Lower leg skin (tissue), 4 donors: ENCODE measurements at regions of chr17 and their contacts with region 1.

Region 1: DNA sequence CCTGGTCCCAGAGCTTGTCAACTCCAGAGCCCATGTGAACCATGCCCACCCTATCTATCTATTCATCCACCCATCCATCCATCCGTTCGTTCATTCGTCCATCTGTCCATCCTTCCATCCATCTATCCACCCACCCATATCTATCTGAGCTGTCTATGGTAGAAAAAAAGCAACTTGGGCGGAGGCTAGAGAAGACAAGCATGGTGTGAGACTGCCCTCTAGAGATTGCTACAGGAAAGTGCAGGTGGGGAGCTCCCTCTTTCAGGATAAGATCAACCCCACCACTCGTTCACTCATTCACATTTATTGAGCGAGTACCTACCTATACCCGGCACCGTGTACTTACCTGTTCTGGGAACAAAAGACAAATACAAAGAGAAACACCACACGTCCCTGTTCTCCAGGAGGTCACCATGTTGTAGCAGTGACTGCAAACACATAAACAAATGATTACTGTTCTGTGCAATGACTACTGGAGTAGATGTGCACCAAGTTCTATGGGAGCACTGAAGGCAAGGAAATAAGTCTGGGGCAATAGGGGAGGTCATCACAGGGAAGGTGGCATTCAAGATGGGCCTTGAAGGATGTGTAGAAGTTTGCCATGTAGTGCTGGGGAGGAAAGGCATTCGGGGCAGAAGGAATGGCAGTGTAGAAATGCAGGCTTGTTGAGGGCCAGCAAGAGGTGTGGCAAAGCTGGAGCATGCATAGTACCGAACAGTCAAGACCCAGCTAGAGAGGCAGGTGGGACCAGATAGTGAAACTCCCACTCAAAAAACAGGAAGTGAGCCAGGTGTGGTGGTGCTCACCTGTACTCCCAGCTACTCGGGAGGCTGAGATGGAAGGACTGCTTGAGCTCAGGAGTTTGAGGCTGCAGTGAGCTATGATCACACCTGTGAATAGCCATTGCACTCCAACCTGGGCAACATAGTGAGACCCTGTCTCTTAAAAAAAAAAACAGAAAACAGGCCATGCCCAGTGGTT is 13.4 kb upstream of the ATP5MC1 start:
- DNase-seq: peak; percentile 40 to 90
- H3K4me3 ChIP-seq: no peak overlapping the region
- CTCF ChIP-seq: peak in 1 of 3 donors; percentile 66
- POLR2A ChIP-seq: no peak

Region 2: DNA sequence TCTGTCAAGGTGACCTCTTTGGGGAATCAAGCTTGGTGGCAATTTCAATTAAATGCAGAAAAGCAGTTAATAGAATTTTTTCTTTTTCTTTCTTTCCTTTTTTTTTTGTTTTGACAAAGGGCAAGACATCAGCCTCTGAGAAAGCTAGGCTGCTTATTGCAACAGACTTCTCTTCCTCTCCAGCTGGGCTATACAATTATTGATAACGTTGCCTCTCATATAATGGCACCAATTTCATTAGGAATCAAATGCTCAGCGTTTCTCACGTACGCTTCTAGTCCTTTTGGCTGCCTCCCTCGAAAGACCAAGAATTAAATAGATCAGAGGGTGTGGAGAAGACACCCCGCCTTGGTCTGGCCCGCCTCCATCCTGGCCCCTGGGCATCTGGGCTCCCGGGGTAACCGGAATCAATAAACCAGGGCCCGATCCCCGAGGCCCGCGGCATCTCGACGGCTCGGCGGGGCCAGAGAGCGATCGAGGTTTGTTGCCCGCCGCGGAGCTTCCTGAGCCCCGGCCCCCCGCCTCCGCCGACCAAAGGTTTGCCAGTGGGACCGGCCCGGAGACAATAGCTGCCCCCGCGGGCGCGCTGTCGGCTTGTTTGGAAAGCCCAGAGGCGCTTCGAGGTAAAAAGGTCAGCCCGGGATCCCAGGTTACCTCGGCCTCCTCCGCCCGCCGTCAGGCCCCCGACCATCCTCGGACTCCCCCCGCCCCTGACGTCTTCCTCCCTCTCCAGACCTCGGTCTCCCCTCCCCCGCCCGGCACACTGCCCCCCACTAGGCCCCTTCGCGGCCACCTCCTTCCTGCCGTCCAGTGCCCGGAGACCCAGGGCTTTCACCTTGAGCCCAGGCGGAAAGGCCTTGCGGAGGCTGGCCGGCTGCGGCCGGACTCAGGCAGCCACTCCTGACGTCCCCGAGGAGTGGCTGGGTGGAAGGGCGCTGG is 352.3 kb before region 1 on chr17:
- intact Hi-C with region 1: no loop called
- DNase-seq: no peak
- H3K4me3 ChIP-seq: no peak overlapping the region
- CTCF ChIP-seq: no peak
- POLR2A ChIP-seq: no peak

Region 3: DNA sequence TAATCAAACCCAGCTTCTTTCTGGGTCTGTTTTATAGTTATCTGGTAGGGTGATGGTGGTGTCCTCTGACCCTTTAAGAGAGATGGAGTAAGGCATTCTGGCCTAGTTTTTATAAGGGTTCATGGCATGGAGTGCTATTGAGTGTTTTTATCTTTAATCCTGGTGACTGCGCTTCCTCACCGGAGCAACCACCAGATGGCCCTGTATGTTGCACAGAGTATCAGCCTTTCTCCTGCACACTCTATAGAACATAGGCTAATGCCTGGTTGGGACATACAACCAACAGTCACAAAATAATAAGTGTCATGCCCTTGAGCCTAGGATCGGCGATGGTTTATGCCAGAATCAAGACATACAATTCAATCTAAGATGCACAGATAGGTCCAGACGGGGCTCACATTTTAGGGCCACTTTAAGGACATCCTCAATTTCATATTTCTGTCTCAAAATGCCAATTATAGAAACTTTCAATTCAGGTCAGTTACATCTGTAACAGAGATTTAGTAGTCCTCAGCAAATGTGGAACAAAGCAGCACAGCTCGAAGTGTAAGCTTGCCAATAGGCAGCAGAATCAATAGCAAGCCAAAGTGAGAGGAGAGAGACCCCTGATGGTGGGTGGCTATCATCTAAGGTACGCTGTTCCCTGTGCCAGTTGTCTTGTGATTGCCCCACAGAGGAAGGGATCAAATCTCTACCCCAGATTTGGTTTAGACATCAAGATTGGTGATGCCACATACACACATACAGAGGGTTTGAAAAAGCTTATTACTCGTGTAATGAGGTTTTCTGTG is 215.9 kb before region 1 on chr17:
- intact Hi-C with region 1: loop called (anchors 1 kb)
- DNase-seq: peak in 1 of 2 donors; percentile 13
- H3K4me3 ChIP-seq: no peak overlapping the region
- CTCF ChIP-seq: no peak
- POLR2A ChIP-seq: no peak

Region 4: GRCh38 chr17:48718761-48719641 is 160.2 kb before region 1 on chr17:
- intact Hi-C with region 1: loop called (anchors 5 kb)
- DNase-seq: no peak
- H3K4me3 ChIP-seq: no peak overlapping the region
- CTCF ChIP-seq: no peak
- POLR2A ChIP-seq: no peak

Region 5: DNA sequence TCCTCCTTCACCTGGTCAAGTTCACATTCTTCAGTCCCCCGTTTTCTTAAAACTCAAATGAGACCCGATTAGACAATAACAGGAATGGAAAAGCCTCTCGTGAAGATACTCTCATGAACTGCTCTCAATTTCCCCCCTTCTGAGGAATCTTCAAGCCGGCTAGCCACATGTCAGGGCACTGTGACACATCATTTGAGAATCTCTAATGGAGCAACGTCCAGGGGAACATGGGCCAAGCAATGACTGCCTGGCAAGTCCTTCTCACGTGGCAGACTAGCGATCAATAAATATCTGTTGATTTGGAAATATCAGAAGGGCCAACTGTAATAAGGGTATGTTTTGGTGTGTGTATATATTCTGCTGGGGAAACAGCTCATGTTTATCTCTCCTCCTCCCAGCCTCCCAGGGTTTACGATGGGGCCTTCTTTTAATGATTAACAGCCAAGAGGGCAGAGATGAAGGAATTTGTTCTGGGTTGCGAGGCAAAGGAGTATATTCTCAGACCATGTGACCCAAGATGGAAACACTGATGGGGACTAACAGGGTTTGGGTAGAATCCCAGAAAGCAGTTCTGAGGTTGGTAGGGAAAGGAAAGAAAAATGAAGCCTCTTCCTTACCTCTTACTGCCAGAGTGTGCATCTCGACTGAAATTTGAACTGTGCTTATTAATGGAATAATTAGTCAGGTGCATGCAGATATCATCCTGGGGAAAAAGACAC is 83.6 kb before region 1 on chr17:
- intact Hi-C with region 1: loop called (anchors 5 kb)
- DNase-seq: peak; percentile 33 to 90
- H3K4me3 ChIP-seq: no peak overlapping the region
- CTCF ChIP-seq: no peak
- POLR2A ChIP-seq: no peak

Region 6: GRCh38 chr17:48816774-48817590 is 62.2 kb before region 1 on chr17 and contains the start of gene TTLL6:
- intact Hi-C with region 1: loop called (anchors 5 kb)
- DNase-seq: peak; percentile 75 to 96
- H3K4me3 ChIP-seq: no peak within 1 kb of the TSS
- CTCF ChIP-seq: no peak
- POLR2A ChIP-seq: no peak
- total RNA-seq, gene TTLL6: not detected

Region 7: DNA sequence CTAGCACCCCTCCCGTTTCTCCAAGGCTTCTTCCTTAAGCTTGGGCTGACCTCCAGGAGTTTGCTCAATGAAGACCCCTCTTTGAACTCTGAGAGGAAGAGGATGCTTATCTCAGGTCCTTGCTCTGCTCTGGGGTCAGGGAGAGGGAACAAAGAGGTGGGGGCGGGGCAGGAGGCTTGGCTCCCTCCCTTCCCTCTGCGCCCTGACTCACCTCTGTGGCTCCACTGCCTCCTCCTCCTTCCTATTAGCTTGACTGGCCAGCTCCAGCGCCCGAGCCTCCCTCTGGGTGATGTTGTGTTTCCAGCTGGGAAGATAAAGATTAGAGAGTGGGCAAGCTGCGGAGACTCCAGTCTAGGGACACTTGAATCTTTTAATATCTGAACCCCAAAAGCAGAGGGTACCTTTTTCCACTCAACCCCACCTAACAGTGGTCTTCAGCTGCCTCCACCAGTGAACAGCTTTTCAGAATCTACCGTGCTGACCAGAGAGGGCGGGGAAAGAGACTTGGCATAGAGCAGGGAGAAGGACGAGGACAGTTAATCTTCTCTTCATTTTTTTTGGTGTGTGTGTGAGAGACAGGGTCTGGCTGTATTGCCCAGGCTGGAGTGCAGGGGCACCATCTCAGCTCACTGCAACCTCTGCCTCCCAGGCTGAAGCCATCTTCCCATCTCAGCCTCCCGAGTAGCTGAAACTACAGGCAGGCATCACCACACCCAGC is 82.5 kb after region 1 on chr17:
- intact Hi-C with region 1: no loop called
- DNase-seq: no peak
- H3K4me3 ChIP-seq: no peak overlapping the region
- CTCF ChIP-seq: no peak
- POLR2A ChIP-seq: no peak

Region 8: DNA sequence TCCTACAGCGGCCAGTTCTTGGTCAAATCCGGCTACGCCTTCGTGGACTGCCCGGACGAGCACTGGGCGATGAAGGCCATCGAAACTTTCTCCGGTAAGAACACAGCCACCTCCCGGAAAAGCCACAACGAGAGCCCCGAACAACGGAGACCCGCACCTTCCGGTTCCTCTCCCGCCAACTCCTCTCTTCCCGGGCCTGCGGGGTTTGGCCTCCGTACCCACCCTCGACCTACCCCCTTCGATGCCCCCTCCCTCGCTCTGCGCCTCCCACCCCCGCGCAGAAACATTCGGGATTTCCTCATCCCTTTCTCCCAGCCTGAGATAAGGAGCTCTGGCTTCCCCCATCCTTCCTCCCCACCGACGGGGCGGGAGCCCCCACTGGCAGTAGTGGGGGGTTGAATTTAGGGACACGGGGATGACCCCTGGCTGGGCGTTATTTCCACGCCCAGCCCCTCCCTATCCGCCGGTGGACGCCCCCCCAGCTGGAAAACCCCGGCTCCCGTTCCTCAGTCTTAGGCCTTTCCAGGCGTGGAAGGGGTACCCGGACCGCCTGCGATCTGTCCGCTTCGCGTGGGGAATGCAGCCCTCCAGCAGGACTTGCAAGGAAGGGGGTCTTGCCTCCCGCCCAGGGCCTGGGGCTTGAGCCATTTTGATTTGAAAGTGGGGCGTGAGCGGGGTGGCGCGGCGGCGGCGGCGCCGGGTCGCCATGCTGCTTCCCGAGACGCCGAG is 118.8 kb after region 1 on chr17:
- intact Hi-C with region 1: no loop called
- DNase-seq: no peak
- H3K4me3 ChIP-seq: peak overlapping the region; percentile 11
- CTCF ChIP-seq: no peak
- POLR2A ChIP-seq: no peak